RWPE1 (cell line): ENCODE measurements at regions of chr17 and their contacts with region 1.

Region 1: GRCh38 chr17:49201481-49201927 is 8.9 kb downstream of the GNGT2 start:
- DNase-seq: no peak
- H3K27ac ChIP-seq: no peak overlapping the region
- CTCF ChIP-seq: no peak

Region 2: GRCh38 chr17:48724251-48725003 is 477.1 kb before region 1 on chr17:
- CTCF ChIA-PET with region 1: no interaction called
- POLR2A ChIA-PET with region 1: no interaction called
- DNase-seq: peak; percentile 60
- H3K27ac ChIP-seq: no peak overlapping the region
- CTCF ChIP-seq: peak; percentile 87

Region 3: GRCh38 chr17:49775543-49776260 is 574.2 kb after region 1 on chr17:
- CTCF ChIA-PET with region 1: no interaction called
- POLR2A ChIA-PET with region 1: interaction called, 11 read pairs
- DNase-seq: no peak
- H3K27ac ChIP-seq: no peak overlapping the region
- CTCF ChIP-seq: no peak